Activated T-helper 1 cell treated with anti-CD3 and anti-CD28 coated beads, Interleukin-12 subunit alpha, Interleukin-12 subunit beta, Interleukin-2, Interleukin-4 antibody, amounts not matched to agents 30 ng/mL and 10 ng/mL and 1 ng/mL, durations not matched to agents 14 hours and 24 hours and 36 hours (primary cell): ENCODE measurements at regions of chr13 and their contacts with region 1.

Region 1: DNA sequence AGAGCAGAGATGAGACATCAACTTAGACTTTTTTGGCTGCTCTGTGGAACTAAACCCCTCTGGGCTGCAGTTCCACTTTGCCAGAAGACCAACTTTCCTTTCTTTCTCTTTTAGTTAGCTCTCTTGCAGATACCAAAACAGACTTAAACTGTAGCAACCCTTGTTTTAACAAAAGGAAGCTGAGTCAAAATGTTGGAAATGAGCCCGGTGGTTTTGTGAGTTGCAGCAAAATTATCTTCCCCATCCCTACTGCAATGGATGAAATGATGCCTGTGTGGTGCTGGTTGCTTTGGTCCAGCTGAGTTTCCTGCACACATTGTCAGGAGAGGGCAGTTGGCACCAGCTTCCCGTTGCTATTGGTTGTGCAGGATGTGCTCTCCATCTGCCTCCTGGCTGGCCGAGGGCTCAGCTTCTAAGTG is 115.3 kb downstream of the LRCH1 start:
- DNase-seq: peak; percentile 18
- H3K4me3 Mint-ChIP-seq: peak overlapping the region; percentile 79
- H3K27ac Mint-ChIP-seq: peak overlapping the region; percentile 87
- H3K4me1 Mint-ChIP-seq: peaks cover 63% of the 10 kb centered on the region
- H3K27me3 Mint-ChIP-seq: no peaks in the 10 kb centered on the region

Region 2: DNA sequence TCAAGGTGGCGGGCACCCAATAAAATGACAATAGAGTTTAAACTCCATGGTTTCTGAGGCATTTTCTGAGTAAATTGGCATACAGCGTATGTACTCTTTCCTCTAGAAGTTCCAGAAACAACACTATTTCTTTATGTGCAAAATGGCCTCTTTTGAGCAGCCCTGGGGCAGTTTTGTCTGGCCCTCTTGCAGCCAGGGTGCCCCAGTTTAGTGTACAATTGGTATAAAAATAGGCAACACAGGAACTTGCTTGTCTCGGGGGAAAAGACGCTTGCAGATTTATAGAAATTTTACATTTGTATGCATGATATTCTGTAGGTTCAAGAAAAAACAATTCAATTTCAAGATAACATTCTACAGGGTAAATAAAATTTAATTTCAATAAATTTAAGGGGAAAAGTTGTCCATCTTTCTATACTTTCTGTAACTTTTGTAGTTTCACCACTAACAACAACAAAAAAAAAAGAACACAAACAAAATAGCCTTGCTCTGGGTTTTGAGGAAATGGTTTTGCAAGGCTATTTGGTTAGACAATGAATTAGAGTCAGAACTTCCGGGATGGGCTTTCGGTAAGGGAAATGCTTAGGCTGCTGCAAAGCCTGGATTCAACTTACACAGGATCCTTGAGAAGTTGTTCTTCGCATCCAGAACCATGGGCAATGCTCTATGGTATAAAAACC is 70.0 kb before region 1 on chr13:
- intact Hi-C with region 1: loop called (anchors 1 kb)
- DNase-seq: no peak
- H3K4me3 Mint-ChIP-seq: no peak overlapping the region
- H3K27ac Mint-ChIP-seq: no peak overlapping the region
- H3K4me1 Mint-ChIP-seq: peaks cover 86% of the 10 kb centered on the region
- H3K27me3 Mint-ChIP-seq: no peaks in the 10 kb centered on the region

Region 3: DNA sequence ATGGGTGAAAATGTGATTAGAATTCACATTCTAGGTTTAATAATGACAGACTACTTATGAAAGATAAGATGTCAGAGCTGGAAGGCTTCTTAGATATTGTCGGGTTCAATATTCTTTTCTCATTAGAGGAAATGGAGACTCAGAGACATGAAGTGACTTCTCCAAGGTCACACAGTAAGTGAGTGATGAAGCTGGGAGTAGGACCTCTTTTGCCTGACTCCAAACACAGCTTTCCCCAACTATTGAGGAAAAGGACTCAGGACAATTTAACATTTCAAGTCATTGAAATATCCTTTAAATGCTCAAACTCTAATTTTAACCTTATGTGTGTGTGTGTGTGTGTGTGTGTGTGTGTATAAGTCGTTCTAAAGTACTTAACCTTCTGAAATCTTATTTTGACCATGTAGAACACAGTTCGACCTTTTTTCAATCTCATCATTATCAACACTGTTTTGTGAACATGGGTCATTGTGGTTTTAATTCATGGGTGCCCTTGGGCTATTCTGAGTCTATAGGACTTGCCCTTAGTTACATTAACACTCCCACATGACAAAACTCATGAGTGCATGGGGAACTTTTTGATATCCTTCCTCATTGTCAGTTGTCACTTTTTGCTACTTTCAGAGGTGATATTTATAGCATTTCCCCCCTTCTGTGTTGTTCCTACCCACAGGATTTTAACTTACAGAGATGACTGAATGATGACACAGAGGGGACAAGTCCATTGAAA is 62.3 kb before region 1 on chr13:
- intact Hi-C with region 1: loop called (anchors 1 kb)
- DNase-seq: no peak
- H3K4me3 Mint-ChIP-seq: peak overlapping the region; percentile 1
- H3K27ac Mint-ChIP-seq: peak overlapping the region; percentile 23
- H3K4me1 Mint-ChIP-seq: peaks cover 64% of the 10 kb centered on the region
- H3K27me3 Mint-ChIP-seq: no peaks in the 10 kb centered on the region

Region 4: GRCh38 chr13:46655377-46656180 is 12.7 kb before region 1 on chr13:
- intact Hi-C with region 1: loop called (anchors 1 kb)
- DNase-seq: no peak
- H3K4me3 Mint-ChIP-seq: peak overlapping the region; percentile 35
- H3K27ac Mint-ChIP-seq: peak overlapping the region; percentile 38
- H3K4me1 Mint-ChIP-seq: peaks cover 35% of the 10 kb centered on the region
- H3K27me3 Mint-ChIP-seq: no peaks in the 10 kb centered on the region

Region 5: GRCh38 chr13:46679369-46680120 is 11.2 kb after region 1 on chr13:
- intact Hi-C with region 1: loop called (anchors 1 kb)
- DNase-seq: peak; percentile 38
- H3K4me3 Mint-ChIP-seq: no peak overlapping the region
- H3K27ac Mint-ChIP-seq: no peak overlapping the region
- H3K4me1 Mint-ChIP-seq: peaks cover 20% of the 10 kb centered on the region
- H3K27me3 Mint-ChIP-seq: no peaks in the 10 kb centered on the region

Region 6: DNA sequence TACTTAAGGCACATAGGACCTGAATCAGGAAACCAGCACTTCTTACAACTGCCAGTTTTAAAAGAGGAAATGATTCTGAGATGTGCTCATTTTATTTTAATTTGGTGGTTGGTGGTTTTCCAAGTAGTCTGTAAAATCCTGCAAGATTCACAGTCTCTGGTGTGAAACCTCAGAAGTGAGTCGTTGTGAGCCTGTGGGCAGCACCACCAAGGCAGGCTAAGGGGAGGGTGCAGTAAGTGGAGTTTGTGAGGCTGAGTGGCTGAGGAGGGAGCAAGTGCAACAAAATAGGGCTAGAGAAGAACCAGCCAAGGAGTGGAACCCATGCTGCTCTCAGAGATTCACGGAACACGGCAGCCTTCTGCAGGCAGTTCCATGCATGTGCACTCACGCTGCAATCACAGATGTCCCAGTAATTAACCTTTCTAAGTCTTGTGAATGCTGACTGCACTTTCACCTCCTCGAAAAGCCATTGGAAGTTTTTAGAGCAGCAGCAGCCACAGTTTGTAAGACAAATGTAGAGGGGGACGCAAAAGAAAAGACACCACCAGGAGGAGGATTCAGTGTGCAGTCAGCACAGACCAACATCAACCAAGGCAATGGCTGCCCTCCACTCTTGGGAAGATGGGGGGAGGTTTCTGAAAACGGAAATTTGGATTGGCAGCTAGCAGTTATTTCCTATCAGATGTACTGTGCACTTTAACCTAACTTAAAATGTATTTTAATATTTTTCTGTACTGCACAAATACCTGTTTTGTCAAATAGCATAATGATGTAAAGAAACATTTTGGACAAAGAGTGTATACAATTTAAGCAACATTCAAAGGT is 83.7 kb after region 1 on chr13:
- intact Hi-C with region 1: loop called (anchors 5 kb)
- DNase-seq: peak; percentile 66
- H3K4me3 Mint-ChIP-seq: peak overlapping the region; percentile 5
- H3K27ac Mint-ChIP-seq: peak overlapping the region; percentile 69
- H3K4me1 Mint-ChIP-seq: peaks cover 47% of the 10 kb centered on the region
- H3K27me3 Mint-ChIP-seq: no peaks in the 10 kb centered on the region